ENCODE measurements at regions of chr17 and their contacts with region 1.

Region 1: DNA sequence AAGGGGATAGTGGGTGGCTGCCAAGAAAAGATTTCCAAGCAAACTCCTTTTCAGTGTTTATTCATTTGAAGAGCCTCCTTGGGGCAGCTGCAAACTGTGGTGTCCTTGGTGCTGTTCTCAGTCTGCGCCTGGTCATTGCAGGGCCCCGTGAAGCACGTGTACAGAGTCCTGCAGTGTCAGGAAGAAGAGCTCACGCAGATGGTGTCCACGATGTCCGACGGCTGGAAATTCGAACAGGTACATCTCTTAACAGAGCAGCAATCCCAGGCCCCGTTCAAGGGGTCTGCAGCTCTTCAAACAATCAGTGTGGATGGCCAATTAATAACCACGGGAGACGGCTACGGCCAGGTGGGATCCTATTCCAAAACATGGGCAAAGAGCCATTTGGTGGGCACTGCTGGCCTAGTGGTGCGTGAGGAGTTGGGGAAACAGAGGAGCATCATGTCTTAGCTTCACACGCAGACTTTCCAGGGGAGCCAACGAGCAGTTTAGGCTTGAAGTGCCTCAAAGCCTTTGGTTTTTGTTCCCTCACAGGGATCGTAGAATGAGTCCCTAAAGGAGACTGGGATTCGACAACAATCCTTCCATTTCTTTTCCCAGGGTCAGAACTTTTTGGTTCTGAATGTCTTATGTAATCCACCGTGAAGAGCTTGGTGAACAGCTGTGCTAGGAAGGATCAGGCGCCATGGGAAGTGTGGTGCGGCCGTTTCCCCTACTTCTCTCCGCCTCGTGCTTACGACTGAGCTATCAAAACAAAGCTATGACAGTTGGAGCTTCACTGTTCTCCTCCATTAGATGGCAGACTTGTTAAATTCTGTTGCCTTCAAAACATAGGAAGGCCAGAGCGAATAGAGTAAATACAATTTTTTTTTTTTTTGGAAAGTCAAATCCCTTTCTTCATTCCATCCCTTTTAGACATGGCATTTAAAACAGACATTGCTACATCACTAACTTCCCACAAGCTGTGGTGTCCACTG is 12.6 kb downstream of the KCTD2 start:
- DNase-seq: peak; percentile 47
- H3K4me3 ChIP-seq: no peak overlapping the region
- H3K27ac ChIP-seq: no peak overlapping the region
- H3K4me1 ChIP-seq: no peaks in the 10 kb centered on the region
- H3K27me3 ChIP-seq: no peaks in the 10 kb centered on the region
- CTCF ChIP-seq: peak; percentile 57
- EP300 ChIP-seq: no peak
- RAD21 ChIP-seq: peak; percentile 55

Region 2: GRCh38 chr17:75046582-75047289 is 12.9 kb before region 1 on chr17 and contains the starts of genes ATP5PD and KCTD2:
- CTCF ChIA-PET with region 1: interaction called, 11 read pairs
- POLR2A ChIA-PET with region 1: interaction called, 6 read pairs
- DNase-seq: peak; percentile 100
- H3K4me3 ChIP-seq: peak within 1 kb of the TSS; percentile 92 to 97
- H3K27ac ChIP-seq: peak within 1 kb of the TSS; percentile 90 to 92
- H3K4me1 ChIP-seq: peaks cover 7 to 15% of the 10 kb centered on the region in 2 experiments; a peak in 2 of 4 replicates
- H3K27me3 ChIP-seq: no peaks in the 10 kb centered on the region
- CTCF ChIP-seq: no peak
- EP300 ChIP-seq: no peak; a peak in 1 of 4 replicates
- RAD21 ChIP-seq: no peak
- polyA plus RNA-seq, gene ATP5PD: 354 and 454 TPM in 2 replicates
- polyA plus RNA-seq, gene KCTD2: 27.5 and 34.2 TPM in 2 replicates